ENCODE measurements at regions of chr12 and their contacts with region 1.

Region 1: GRCh38 chr12:38138225-38139221 is 178.1 kb upstream of the ALG10B start:
- DNase-seq: peak; percentile 29 to 74 (median 49)
- H3K4me3 ChIP-seq: no peak overlapping the region
- H3K4me3 Mint-ChIP-seq: peak overlapping the region; percentile 58 to 91
- H3K27ac ChIP-seq: no peak overlapping the region
- H3K27ac Mint-ChIP-seq: peak overlapping the region in 2 of 7 donors; percentile 43 to 46
- H3K4me1 ChIP-seq: peaks cover 4 to 6% of the 10 kb centered on the region in 2 donors
- H3K4me1 Mint-ChIP-seq: peaks cover 8% of the 10 kb centered on the region
- H3K27me3 ChIP-seq: peaks cover 0 to 11% of the 10 kb centered on the region in 2 donors
- H3K27me3 Mint-ChIP-seq: peaks cover 13 to 18% (median 18%) of the 10 kb centered on the region in 3 donors
- CTCF ChIP-seq: peak; percentile 94

Region 2: GRCh38 chr12:38316391-38317129 is 178.0 kb after region 1 on chr12 and contains the start of gene ALG10B:
- intact Hi-C with region 1: loop called (anchors 5 kb)
- DNase-seq: peak; percentile 93 to 95 (median 95)
- H3K4me3 ChIP-seq: peak within 1 kb of the TSS; percentile 51 to 86 (median 59)
- H3K4me3 Mint-ChIP-seq: peak within 1 kb of the TSS; percentile 94 to 97
- H3K27ac ChIP-seq: peak within 1 kb of the TSS; percentile 82 to 91
- H3K27ac Mint-ChIP-seq: peak within 1 kb of the TSS; percentile 90 to 96 (median 95)
- H3K4me1 ChIP-seq: peaks cover 6% of the 10 kb centered on the region in 2 donors
- H3K4me1 Mint-ChIP-seq: peaks cover 11% of the 10 kb centered on the region
- H3K27me3 ChIP-seq: peaks cover 4% of the 10 kb centered on the region in 2 donors
- H3K27me3 Mint-ChIP-seq: peaks cover 0 to 3% (median 2%) of the 10 kb centered on the region in 3 donors
- CTCF ChIP-seq: peak; percentile 65
- polyA plus RNA-seq, gene ALG10B: 1.2 to 2.2 (median 1.6) TPM